Dorsolateral prefrontal cortex (tissue), 120 donors: ENCODE measurements at regions of chr6 and their contacts with region 1.

Region 1: GRCh38 chr6:91081452-91082067 is 494.7 kb upstream of the MAP3K7 start:
- DNase-seq: peak in 1 of 10 donors; percentile 7
- H3K4me3 ChIP-seq: no peak overlapping the region
- H3K27ac ChIP-seq: peak overlapping the region in 1 of 59 donors; percentile 3
- H3K27me3 ChIP-seq: no peaks in the 10 kb centered on the region
- CTCF ChIP-seq: peak; percentile 52 to 86 (median 75)

Region 2: DNA sequence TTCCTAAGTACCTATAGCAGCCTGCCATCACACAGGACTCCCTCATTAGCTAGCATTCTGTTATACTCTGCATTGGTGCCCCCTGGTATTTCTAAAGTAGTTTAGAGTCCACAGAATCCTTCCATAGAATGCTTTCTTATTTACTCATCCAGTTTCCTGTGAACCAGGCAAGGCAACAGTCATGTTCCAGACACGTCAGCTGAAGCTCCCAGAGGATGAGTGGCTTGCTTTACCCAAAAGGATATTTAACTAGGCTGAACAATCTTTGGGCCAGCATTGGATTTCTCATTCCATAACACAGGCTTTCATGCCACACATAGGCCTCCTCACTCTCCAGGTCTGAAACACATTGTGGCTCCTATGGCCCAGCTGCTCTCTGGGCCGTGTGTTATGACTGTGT is 290.9 kb before region 1 on chr6:
- intact Hi-C with region 1: no loop called
- DNase-seq: no peak
- H3K4me3 ChIP-seq: no peak overlapping the region
- H3K27ac ChIP-seq: no peak overlapping the region
- H3K27me3 ChIP-seq: no peaks in the 10 kb centered on the region
- CTCF ChIP-seq: no peak

Region 3: GRCh38 chr6:91094806-91095475 is 13.4 kb after region 1 on chr6:
- intact Hi-C with region 1: loop called in 1 of 2 experiments (anchors 1 kb)
- DNase-seq: no peak
- H3K4me3 ChIP-seq: no peak overlapping the region
- H3K27ac ChIP-seq: no peak overlapping the region
- H3K27me3 ChIP-seq: no peaks in the 10 kb centered on the region
- CTCF ChIP-seq: no peak

Region 4: DNA sequence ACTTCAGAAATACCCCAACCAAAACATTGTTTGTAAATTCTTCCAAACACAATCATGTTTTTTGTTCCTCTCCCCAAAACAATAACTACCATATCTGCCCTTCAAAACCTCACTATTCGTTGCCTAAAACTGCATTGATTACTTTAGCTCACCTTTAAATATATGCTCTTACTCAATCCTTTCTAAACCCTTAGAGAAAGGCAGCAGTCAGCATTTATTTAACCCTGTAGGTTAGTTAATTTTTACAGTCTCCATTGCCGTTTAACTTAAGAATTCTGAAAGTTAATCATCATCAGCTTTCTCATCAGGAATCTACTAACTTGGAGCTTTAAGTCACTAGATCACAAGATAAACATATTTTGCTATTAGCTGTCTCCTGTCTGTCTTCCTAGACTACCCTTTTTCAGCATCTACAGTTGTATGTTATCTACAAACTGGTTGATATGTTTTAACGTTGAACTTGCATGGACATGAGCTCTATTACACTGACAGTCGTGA is 1345.9 kb after region 1 on chr6:
- intact Hi-C with region 1: no loop called
- DNase-seq: no peak
- H3K4me3 ChIP-seq: no peak overlapping the region
- H3K27ac ChIP-seq: no peak overlapping the region
- H3K27me3 ChIP-seq: no peaks in the 10 kb centered on the region
- CTCF ChIP-seq: no peak